H1 (cell line): ENCODE measurements at regions of chr15 and their contacts with region 1.

Region 1: DNA sequence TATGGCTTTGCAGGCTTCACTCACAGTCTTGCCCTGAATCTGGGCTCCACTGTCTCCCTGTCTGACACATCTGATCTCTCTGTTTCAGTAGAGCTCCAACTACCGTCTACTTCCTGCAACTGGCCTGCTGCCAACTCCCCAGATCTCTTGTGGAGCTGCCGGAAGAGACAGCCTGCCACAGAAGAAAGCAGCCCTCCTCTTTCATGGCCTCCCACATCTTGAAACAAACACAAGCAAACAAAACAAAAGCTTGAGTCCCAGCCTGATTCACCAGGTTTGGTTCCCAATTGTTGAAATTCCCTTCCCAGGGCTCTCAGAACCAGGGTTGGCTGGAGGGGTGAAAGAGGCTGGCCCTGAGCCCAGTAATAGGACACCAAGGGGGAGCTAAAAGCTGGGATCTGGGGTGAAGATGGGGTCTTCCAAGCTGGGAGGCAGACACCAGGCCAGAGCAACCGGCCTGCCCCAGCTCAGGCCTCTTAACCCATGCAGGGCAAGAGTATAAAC is 55.3 kb upstream of the CA12 start:
- DNase-seq: no peak
- H3K4me3 ChIP-seq: no peak overlapping the region; a peak in 2 of 8 replicates
- H3K27ac ChIP-seq: no peak overlapping the region
- H3K4me1 ChIP-seq: peaks cover 0 to 16% (median 11%) of the 10 kb centered on the region in 4 experiments; a peak in 5 of 7 replicates
- H3K27me3 ChIP-seq: no peaks in the 10 kb centered on the region; a peak in 1 of 7 replicates
- CTCF ChIP-seq: no peak; a peak in 1 of 4 replicates
- EP300 ChIP-seq: no peak
- POLR2A ChIP-seq: no peak
- RAD21 ChIP-seq: peak in 1 of 2 experiments; percentile 16; a peak in 1 of 4 replicates

Region 2: DNA sequence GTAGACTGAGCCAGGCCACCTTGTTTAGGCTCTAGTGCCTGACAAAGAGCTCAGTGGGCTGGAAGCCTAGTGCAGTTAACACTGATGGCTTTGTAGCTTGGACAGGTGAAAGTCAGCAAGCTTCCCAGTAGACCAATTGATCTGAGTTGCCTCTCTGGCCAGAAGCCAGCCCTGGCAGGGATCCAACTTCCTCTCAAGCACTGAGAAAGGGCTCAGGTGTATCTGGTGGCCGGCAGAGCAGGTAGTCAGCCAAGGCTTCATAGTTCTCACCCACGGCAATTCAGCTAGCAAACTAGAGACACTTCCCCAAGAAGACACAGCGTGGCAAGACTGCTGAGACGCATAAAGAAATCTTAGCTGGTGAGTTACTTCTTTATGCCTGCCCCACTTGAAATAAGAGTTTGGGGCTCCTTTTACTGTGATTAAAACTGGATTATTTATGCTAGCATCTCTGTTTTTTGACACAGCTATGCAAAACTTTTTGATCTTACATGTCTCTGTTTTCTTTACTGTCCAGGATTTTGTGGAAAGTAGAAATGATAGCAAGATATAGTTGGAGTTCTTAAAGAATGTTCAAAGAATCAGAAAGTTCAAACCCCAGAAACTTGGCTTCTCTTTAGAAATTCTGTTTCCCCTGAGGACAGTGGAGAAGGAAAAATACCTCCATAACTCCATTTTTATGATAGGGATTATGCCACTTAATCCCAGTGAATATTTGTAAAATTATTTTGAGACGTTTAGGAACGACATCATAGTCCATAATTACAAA is 46.8 kb before region 1 on chr15:
- CTCF ChIA-PET with region 1: no interaction called
- POLR2A ChIA-PET with region 1: no interaction called
- DNase-seq: no peak
- H3K4me3 ChIP-seq: no peak overlapping the region
- H3K27ac ChIP-seq: no peak overlapping the region
- H3K4me1 ChIP-seq: no peaks in the 10 kb centered on the region
- H3K27me3 ChIP-seq: peaks cover 3 to 4% (median 3%) of the 10 kb centered on the region in 4 experiments; a peak in 4 of 7 replicates
- CTCF ChIP-seq: no peak
- EP300 ChIP-seq: no peak
- POLR2A ChIP-seq: no peak
- RAD21 ChIP-seq: no peak

Region 3: DNA sequence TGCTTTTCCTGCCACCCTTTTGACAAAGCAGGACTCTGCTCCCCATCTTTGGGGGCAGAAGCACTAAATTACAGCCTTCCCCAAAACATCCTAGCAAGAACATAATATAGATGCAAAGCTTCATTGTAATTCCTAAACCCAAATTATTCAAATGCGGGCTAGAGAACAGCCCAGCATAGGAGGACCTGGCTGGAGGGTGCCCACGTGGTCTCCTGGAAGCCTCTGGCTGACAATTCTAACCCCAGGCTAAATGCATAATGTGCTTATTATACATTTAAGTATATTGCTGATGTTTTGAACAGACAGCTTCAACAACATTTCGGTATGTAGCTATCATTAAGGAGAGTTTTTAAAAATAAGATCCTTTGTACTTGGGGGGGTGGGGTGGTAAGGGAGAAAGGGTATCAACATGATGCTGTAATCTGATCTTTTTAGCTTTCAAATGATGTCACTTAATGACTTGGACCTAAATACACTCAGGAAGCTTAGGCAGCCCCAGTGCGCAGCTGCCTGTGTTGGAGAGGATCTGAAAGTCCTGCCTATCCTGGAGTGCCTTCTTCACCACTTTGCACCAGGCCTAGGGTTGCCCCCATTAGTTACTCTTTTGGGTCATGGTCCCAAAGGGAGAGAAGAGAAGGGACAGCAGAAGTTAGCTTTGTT is 10.2 kb after region 1 on chr15:
- CTCF ChIA-PET with region 1: interaction called, 24 read pairs
- POLR2A ChIA-PET with region 1: interaction called, 5 read pairs
- DNase-seq: no peak
- H3K4me3 ChIP-seq: no peak overlapping the region
- H3K27ac ChIP-seq: no peak overlapping the region
- H3K4me1 ChIP-seq: peaks cover 0 to 10% (median 4%) of the 10 kb centered on the region in 4 experiments; a peak in 3 of 7 replicates
- H3K27me3 ChIP-seq: no peaks in the 10 kb centered on the region
- CTCF ChIP-seq: no peak
- EP300 ChIP-seq: no peak
- POLR2A ChIP-seq: no peak
- RAD21 ChIP-seq: no peak

Region 4: GRCh38 chr15:63461230-63461985 is 24.5 kb after region 1 on chr15:
- CTCF ChIA-PET with region 1: interaction called, 14 read pairs
- POLR2A ChIA-PET with region 1: interaction called, 3 read pairs
- DNase-seq: peak; percentile 56 to 70
- H3K4me3 ChIP-seq: peak overlapping the region in 3 of 4 experiments; percentile 0 to 33 (median 5); a peak in 3 of 8 replicates
- H3K27ac ChIP-seq: no peak overlapping the region
- H3K4me1 ChIP-seq: no peaks in the 10 kb centered on the region; a peak in 1 of 7 replicates
- H3K27me3 ChIP-seq: peaks cover 0 to 8% (median 3%) of the 10 kb centered on the region in 4 experiments; a peak in 3 of 7 replicates
- CTCF ChIP-seq: peak; percentile 44 to 58 (median 55)
- EP300 ChIP-seq: no peak
- POLR2A ChIP-seq: no peak
- RAD21 ChIP-seq: peak; percentile 62 to 86